ENCODE measurements at regions of chr10 and their contacts with region 1.

Region 1: DNA sequence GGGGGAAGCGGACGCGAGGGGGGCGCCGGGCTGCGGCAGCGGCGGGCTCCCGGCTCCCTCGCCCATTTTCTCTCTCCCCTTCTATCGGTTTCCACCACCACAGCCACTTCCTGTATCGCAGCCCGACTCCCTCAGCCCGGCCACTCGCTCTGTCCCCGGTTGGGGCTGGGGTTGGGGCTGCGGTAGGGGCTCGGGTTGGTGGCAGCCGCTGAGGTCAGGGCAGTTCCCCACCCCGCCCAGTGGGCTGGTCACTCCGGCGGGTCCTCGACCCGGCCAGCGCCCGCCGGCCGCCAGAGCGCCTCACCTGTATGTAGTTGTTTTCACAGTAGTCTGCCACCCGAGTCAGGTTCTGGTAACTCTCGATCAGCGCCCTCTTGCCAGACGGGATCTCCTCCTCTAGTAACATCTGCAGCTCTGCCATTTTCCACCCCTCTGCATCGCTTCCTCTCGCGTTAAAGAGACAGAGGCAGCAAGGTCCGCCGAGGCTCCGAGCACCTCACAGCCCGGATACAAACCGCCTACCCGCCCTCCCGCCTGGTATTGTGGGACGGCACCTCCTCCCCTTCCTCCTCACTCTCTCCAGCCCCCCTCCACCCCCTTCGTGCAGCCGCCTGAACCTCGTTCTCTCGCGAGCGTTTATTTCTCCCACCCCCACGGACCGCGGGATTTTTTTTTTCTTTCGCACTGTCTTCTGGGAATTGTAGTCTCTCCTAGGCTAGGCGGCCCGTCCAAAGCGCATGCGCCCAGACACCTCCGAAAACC is at the start of gene ABI1:
- DNase-seq: peak; percentile 89 to 96
- H3K4me3 ChIP-seq: peak within 1 kb of the TSS; percentile 72
- H3K27ac ChIP-seq: peak within 1 kb of the TSS; percentile 85
- H3K4me1 ChIP-seq: peaks cover 11% of the 10 kb centered on the region
- H3K27me3 ChIP-seq: no peaks in the 10 kb centered on the region
- CTCF ChIP-seq: no peak
- total RNA-seq, gene ABI1: 41.3 and 50.8 TPM in 2 replicates

Region 2: GRCh38 chr10:26725837-26726727 is 134.5 kb before region 1 on chr10:
- CTCF ChIA-PET with region 1: no interaction called
- POLR2A ChIA-PET with region 1: no interaction called
- intact Hi-C with region 1: loop called (anchors 5 kb)
- DNase-seq: peak in 1 of 2 experiments; percentile 32
- H3K4me3 ChIP-seq: no peak overlapping the region
- H3K27ac ChIP-seq: no peak overlapping the region
- H3K4me1 ChIP-seq: no peaks in the 10 kb centered on the region
- H3K27me3 ChIP-seq: no peaks in the 10 kb centered on the region
- CTCF ChIP-seq: peak; percentile 83

Region 3: DNA sequence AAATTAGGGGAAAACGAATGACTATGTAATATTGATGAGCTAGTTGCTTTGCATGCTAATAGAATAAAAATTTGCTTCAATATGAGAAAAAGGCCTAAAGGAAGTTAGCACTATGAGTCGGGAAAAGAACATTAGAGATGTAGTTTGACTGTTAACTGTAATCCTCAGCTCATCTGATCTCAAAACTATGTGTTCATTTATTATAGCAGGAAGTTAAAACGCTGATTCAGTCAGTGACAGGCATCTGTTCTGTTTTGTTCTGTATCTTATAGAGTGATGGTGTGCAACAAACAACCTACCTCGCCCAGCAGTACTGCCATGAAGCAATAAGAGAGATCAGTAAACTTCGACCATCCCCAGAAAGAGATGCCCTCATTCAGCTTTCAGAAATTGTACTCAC is 114.6 kb before region 1 on chr10:
- CTCF ChIA-PET with region 1: no interaction called
- POLR2A ChIA-PET with region 1: no interaction called
- intact Hi-C with region 1: loop called (anchors 5 kb)
- DNase-seq: no peak
- H3K4me3 ChIP-seq: no peak overlapping the region
- H3K27ac ChIP-seq: no peak overlapping the region
- H3K4me1 ChIP-seq: no peaks in the 10 kb centered on the region
- H3K27me3 ChIP-seq: no peaks in the 10 kb centered on the region
- CTCF ChIP-seq: no peak

Region 4: DNA sequence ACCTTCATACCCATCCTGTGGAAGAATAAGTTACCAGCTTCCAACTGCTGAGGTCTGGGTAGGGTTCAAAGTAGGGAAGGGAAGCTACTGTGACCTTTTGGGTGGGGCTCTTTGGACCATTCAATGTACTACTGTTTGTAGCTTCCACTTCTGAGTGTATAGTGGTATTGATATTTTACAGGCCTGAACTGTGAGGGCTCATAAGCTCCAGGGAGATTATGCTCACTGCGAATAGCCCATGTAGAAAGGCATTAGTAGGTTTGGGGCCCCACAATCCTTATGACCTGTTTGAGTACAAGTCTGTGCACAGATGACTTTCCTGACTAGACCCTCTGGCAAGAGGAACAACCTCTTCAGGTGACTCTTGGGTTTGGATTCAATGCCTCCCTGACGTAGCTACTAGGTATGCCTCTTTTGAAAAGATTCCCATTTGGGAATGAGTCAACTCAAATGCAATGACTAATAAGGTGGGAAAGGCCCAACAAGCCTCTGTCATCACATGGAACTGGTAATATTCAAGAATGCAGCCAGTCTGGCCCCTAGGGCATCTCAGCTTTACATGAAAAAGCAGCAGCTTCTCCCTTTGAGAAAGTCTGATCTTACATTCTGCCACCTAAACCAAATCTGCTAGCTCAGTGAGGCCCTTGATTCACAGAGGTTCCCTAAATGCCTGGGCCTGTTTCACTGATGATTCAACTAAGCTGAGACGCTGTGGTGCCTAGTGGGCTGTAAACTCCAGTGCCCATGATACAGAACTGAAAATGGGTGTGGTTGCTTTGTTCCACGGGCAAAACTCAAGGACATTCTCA is 79.6 kb before region 1 on chr10:
- CTCF ChIA-PET with region 1: no interaction called
- POLR2A ChIA-PET with region 1: interaction called, 4 read pairs
- intact Hi-C with region 1: loop called (anchors 1 kb)
- DNase-seq: peak; percentile 75 to 92
- H3K4me3 ChIP-seq: no peak overlapping the region
- H3K27ac ChIP-seq: peak overlapping the region; percentile 92
- H3K4me1 ChIP-seq: peaks cover 20% of the 10 kb centered on the region
- H3K27me3 ChIP-seq: no peaks in the 10 kb centered on the region
- CTCF ChIP-seq: no peak

Region 5: DNA sequence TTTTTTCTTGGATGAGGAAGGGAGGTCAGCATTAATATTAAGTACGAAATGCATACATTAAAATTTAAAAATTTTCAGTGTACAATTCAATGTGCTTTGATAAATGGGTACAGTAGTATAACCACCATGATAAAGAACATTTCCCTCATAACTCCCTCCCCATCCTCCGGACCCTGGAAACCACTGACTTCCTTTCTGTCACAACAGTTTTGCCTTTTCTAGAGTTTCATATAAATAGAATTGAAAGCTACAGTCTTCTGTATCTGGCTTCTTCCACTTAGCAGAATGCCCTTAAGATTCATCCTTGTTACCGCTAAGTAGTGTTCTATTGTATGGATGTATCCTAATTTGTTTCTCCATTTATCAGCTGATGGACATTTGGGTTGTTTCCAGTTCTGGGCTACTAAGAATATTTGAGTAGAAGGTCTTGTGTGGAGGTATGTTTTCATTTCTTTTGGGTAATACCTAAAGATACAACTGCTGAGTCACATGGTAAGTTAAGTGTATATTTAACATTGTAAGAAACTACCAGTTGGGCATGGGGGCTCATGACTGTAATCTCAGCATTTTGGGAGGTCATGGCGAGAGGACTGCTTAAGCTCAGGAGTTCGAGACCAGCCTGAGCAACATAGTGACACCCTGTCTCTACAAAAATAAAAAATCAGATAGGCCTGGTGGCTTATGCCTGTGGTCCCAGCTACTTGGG is 30.7 kb before region 1 on chr10:
- CTCF ChIA-PET with region 1: no interaction called
- POLR2A ChIA-PET with region 1: no interaction called
- intact Hi-C with region 1: no loop called
- DNase-seq: no peak
- H3K4me3 ChIP-seq: no peak overlapping the region
- H3K27ac ChIP-seq: no peak overlapping the region
- H3K4me1 ChIP-seq: no peaks in the 10 kb centered on the region
- H3K27me3 ChIP-seq: no peaks in the 10 kb centered on the region
- CTCF ChIP-seq: no peak

Region 6: GRCh38 chr10:26903431-26904217 is 43.0 kb after region 1 on chr10:
- CTCF ChIA-PET with region 1: no interaction called
- POLR2A ChIA-PET with region 1: no interaction called
- intact Hi-C with region 1: no loop called
- DNase-seq: no peak
- H3K4me3 ChIP-seq: no peak overlapping the region
- H3K27ac ChIP-seq: no peak overlapping the region
- H3K4me1 ChIP-seq: no peaks in the 10 kb centered on the region
- H3K27me3 ChIP-seq: no peaks in the 10 kb centered on the region
- CTCF ChIP-seq: no peak